CD8-positive, alpha-beta T cell (primary cell): ENCODE measurements at regions of chr4 and their contacts with region 1.

Region 1: DNA sequence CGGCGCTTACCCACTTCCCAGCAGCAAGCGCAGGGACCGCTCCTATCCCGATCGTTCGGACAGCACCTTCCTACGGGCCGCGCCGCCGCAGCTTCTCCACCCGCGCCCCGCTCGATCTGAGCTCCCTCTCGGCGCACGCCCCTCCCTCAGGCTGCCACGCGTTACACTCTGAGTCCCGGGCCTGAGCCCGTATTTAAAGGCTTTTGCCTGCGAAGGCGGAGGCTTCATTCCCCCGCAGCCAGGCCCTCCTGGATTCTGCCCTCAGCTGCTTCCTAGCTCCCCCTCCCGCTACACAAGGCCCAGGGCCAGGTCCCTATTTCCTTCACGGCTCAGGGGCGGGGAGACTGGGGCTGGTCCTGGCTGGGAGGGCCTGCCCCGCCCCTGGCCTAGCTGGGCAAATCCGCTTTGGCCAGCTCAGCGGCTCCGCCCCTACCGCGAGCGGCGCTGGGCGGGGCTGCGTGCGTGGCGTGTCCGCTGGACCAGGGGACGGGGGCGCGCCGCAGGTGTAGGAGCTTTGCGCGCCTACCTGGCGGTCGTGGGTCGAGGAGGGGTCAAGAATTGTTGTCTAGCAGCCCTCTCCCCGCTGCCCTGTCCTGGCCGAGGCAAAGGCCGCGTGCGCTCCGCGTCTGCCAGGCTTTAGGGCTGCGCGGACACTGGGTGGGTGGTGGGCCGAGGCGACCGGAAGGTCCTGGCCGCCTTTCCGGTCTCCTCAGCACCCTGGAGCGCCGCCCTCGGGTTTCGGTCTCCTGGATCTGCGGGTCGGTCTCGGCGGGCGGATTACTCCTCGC is at the start of gene UGDH:
- DNase-seq: peak; percentile 81 to 96 (median 90)
- ATAC-seq: peak; percentile 98
- H3K4me3 ChIP-seq: peak within 1 kb of the TSS; percentile 87 to 89
- H3K4me3 Mint-ChIP-seq: peak within 1 kb of the TSS; percentile 96
- H3K27ac ChIP-seq: peak within 1 kb of the TSS; percentile 68 to 74
- H3K27ac Mint-ChIP-seq: peak within 1 kb of the TSS; percentile 93
- H3K4me1 ChIP-seq: peaks cover 17% of the 10 kb centered on the region
- H3K4me1 Mint-ChIP-seq: peaks cover 24% of the 10 kb centered on the region
- H3K27me3 ChIP-seq: no peaks in the 10 kb centered on the region
- H3K27me3 Mint-ChIP-seq: no peaks in the 10 kb centered on the region
- CTCF ChIP-seq: no peak
- total RNA-seq, gene UGDH: 2.6 to 3.6 TPM

Region 2: DNA sequence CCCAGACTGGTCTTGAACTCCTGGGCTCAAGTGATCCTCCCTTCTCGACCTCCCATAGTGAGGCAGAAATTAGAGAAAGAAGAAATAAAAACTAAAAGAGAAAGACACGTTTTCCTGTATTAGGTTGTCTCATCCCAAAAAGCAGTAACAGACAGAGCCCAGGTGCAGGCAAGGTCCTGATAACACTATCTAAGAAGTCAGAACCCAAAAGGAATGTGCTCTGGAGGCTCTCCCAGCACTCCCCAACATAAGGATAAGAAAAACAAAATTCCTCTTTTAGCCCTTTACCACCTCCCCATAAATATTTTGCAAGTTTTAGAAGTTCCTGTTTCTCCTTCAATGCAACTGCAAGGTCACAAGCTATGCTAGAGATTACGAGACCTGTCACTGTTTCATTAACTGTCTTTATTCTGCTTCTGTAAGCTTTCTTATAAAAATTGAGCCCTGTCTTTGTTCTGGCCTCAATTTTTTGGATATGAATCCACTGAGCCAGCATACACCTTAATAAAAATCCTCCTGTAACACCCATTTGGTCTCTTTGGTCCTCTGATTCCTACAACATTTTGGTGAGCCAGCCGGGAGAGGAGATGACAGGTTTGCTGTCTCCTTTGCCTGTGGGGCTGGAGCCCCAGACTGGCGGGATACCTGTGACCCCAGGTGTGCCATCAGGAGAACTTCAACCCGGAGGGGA is 42.7 kb before region 1 on chr4:
- CTCF ChIA-PET with region 1: no interaction called
- POLR2A ChIA-PET with region 1: no interaction called
- intact Hi-C with region 1: no loop called
- DNase-seq: no peak
- ATAC-seq: no peak
- H3K4me3 ChIP-seq: no peak overlapping the region
- H3K4me3 Mint-ChIP-seq: no peak overlapping the region
- H3K27ac ChIP-seq: no peak overlapping the region
- H3K27ac Mint-ChIP-seq: no peak overlapping the region
- H3K4me1 ChIP-seq: no peaks in the 10 kb centered on the region
- H3K4me1 Mint-ChIP-seq: no peaks in the 10 kb centered on the region
- H3K27me3 ChIP-seq: no peaks in the 10 kb centered on the region
- H3K27me3 Mint-ChIP-seq: no peaks in the 10 kb centered on the region
- CTCF ChIP-seq: no peak

Region 3: GRCh38 chr4:39638354-39639240 is 111.1 kb after region 1 on chr4 and contains the start of gene SMIM14:
- CTCF ChIA-PET with region 1: no interaction called
- POLR2A ChIA-PET with region 1: interaction called, 17 read pairs
- intact Hi-C with region 1: loop called (anchors 1 to 2 kb)
- DNase-seq: peak; percentile 72 to 95 (median 90)
- ATAC-seq: peak; percentile 83
- H3K4me3 ChIP-seq: peak within 1 kb of the TSS; percentile 62 to 97
- H3K4me3 Mint-ChIP-seq: peak within 1 kb of the TSS; percentile 90
- H3K27ac ChIP-seq: peak within 1 kb of the TSS; percentile 63 to 91
- H3K27ac Mint-ChIP-seq: peak within 1 kb of the TSS; percentile 96
- H3K4me1 ChIP-seq: peaks cover 18% of the 10 kb centered on the region
- H3K4me1 Mint-ChIP-seq: peaks cover 44% of the 10 kb centered on the region
- H3K27me3 ChIP-seq: no peaks in the 10 kb centered on the region
- H3K27me3 Mint-ChIP-seq: no peaks in the 10 kb centered on the region
- CTCF ChIP-seq: no peak
- total RNA-seq, gene SMIM14: 1.4 TPM

Region 4: GRCh38 chr4:39730072-39730471 is 202.6 kb after region 1 on chr4:
- CTCF ChIA-PET with region 1: no interaction called
- POLR2A ChIA-PET with region 1: no interaction called
- intact Hi-C with region 1: no loop called
- DNase-seq: no peak
- ATAC-seq: no peak
- H3K4me3 ChIP-seq: no peak overlapping the region
- H3K4me3 Mint-ChIP-seq: no peak overlapping the region
- H3K27ac ChIP-seq: no peak overlapping the region
- H3K27ac Mint-ChIP-seq: peak overlapping the region; percentile 76
- H3K4me1 ChIP-seq: peaks cover under 1% of the 10 kb centered on the region
- H3K4me1 Mint-ChIP-seq: peaks cover 51% of the 10 kb centered on the region
- H3K27me3 ChIP-seq: no peaks in the 10 kb centered on the region
- H3K27me3 Mint-ChIP-seq: no peaks in the 10 kb centered on the region
- CTCF ChIP-seq: no peak